CD8-positive, alpha-beta T cell (primary cell): ENCODE measurements at regions of chr13 and their contacts with region 1.

Region 1: GRCh38 chr13:99269627-99270241 is 11.6 kb upstream of the GPR18 start:
- DNase-seq: peak in 4 of 9 experiments; percentile 26 to 84 (median 58)
- ATAC-seq: peak; percentile 68
- H3K4me3 ChIP-seq: no peak overlapping the region
- H3K4me3 Mint-ChIP-seq: no peak overlapping the region
- H3K27ac ChIP-seq: no peak overlapping the region
- H3K27ac Mint-ChIP-seq: peak overlapping the region; percentile 92
- H3K4me1 ChIP-seq: peaks cover 54% of the 10 kb centered on the region
- H3K4me1 Mint-ChIP-seq: peaks cover 63% of the 10 kb centered on the region
- H3K27me3 ChIP-seq: no peaks in the 10 kb centered on the region
- H3K27me3 Mint-ChIP-seq: no peaks in the 10 kb centered on the region
- CTCF ChIP-seq: peak; percentile 91

Region 2: DNA sequence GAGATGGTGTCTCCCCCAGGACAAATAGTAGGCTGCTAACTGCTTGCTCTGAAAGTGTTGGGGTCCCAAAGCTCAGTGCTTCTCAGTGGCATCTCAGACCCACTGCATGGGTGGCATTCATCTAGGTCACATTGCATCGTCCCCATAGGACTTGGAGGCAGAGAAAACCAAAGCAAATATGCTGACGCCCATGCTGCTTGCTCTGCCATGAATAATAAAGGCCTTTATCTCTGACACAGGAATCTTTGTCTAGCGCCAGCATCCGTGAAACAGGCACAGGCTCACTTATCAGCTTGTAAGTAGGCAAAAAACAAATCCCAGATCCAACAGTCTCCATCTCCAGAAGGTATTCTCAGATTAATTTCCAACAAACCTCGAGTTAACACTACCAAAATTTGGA is 1335.1 kb before region 1 on chr13:
- CTCF ChIA-PET with region 1: no interaction called
- POLR2A ChIA-PET with region 1: no interaction called
- intact Hi-C with region 1: no loop called
- DNase-seq: no peak
- ATAC-seq: no peak
- H3K4me3 ChIP-seq: no peak overlapping the region
- H3K4me3 Mint-ChIP-seq: no peak overlapping the region
- H3K27ac ChIP-seq: no peak overlapping the region
- H3K27ac Mint-ChIP-seq: no peak overlapping the region
- H3K4me1 ChIP-seq: no peaks in the 10 kb centered on the region
- H3K4me1 Mint-ChIP-seq: no peaks in the 10 kb centered on the region
- H3K27me3 ChIP-seq: no peaks in the 10 kb centered on the region
- H3K27me3 Mint-ChIP-seq: peaks cover 43% of the 10 kb centered on the region
- CTCF ChIP-seq: no peak

Region 3: DNA sequence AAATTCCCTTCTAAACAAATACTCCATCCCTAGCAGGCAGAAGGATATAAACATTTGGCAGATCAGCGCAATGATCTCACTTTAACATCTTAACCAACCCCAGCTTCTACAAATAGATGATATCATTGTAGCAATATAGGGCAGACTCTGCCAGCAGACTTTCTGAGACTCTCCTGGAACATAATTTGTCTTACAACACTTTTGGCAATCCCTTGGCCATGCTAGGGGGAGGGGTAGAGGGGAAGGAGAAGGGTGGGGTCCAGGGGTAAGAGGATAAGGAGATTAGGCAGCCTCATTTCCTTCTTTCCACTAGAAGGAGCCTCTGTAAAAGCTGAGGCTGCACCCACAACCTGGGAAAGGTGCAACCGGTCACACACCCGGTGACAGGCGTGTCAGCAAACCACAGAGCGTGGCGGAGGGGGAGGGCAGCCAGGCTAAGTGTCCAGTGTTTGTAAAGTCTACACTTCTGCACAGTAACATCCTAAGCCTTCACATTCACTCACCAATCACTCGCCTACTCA is 77.8 kb before region 1 on chr13:
- CTCF ChIA-PET with region 1: interaction called, 254 read pairs
- POLR2A ChIA-PET with region 1: interaction called, 5 read pairs
- intact Hi-C with region 1: loop called (anchors 1 kb)
- DNase-seq: no peak
- ATAC-seq: no peak
- H3K4me3 ChIP-seq: no peak overlapping the region
- H3K4me3 Mint-ChIP-seq: no peak overlapping the region
- H3K27ac ChIP-seq: no peak overlapping the region
- H3K27ac Mint-ChIP-seq: no peak overlapping the region
- H3K4me1 ChIP-seq: peaks cover 15% of the 10 kb centered on the region
- H3K4me1 Mint-ChIP-seq: peaks cover 31% of the 10 kb centered on the region
- H3K27me3 ChIP-seq: no peaks in the 10 kb centered on the region
- H3K27me3 Mint-ChIP-seq: no peaks in the 10 kb centered on the region
- CTCF ChIP-seq: no peak

Region 4: DNA sequence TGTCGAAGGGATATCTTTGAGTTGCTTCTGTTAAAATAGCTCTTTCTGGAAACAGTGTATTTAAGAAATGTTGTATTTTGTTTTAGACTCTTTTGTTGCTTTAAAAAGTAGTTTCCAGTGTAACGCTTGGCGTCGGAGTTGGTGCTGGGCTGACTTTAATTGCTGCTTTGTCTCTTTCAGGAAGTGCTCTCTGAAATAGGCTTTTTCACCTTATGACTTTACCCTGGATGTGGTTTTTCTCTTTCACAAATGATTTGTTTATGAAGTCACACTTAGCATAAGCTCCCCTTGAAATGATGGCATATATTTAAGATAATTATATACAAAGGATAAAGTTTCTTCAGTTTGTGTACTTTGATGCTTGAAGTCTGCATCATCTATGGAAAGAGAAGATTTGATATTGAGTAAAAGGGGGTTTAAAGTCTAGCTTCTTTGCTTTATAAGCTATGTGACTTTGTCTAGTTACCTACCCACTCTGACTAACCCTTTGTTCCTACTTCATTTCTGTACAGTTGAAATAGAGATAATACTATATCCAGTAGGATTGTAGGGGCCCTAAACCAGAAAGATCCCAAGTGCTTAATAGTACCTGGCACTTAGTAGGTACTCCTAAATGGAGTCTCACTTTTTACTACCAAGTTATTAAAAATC is 11.4 kb before region 1 on chr13 and contains the start of gene GPR18:
- CTCF ChIA-PET with region 1: interaction called, 16 read pairs
- POLR2A ChIA-PET with region 1: interaction called, 4 read pairs
- intact Hi-C with region 1: no loop called
- DNase-seq: peak in 4 of 9 experiments; percentile 41 to 80 (median 53)
- ATAC-seq: peak; percentile 77
- H3K4me3 ChIP-seq: peak within 1 kb of the TSS; percentile 55 to 63
- H3K4me3 Mint-ChIP-seq: peak within 1 kb of the TSS; percentile 91
- H3K27ac ChIP-seq: peak within 1 kb of the TSS; percentile 67 to 82
- H3K27ac Mint-ChIP-seq: peak within 1 kb of the TSS; percentile 94
- H3K4me1 ChIP-seq: peaks cover 63% of the 10 kb centered on the region
- H3K4me1 Mint-ChIP-seq: peaks cover 74% of the 10 kb centered on the region
- H3K27me3 ChIP-seq: no peaks in the 10 kb centered on the region
- H3K27me3 Mint-ChIP-seq: no peaks in the 10 kb centered on the region
- CTCF ChIP-seq: no peak
- total RNA-seq, gene GPR18: 31.9 to 36.2 TPM

Region 5: DNA sequence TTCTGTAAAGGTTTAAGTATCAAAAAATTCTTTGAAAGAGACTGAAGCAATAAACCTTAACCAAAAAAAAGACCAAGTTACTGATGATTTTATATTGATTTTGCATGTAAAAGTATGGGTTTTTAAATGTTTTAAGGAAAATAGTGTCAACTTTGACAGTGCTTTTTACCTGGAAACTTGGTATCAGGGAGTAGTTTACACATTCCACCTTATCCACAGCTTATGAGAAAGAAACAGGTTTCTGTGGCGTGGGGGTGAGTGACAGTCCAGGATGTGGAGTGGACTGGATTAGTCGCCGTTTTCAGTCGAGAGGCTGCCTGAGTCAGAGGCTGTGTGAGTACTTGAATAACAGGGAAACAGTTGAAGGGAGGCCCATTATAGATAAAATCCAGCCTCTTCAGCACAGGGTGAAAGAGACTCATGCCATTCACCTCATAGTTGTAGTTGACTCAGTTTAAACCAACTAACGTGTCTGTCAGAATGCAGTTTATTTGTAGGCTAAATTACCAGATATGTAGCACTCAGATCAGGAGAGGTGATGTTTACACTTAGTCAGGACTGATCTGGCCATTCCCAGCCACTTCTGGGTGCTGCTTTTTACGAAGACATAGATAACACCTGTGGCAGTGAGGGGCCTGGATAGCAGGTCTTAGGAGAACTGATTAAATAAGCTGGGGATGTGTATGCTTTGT is 38.1 kb after region 1 on chr13:
- CTCF ChIA-PET with region 1: interaction called, 78 read pairs
- POLR2A ChIA-PET with region 1: interaction called, 6 read pairs
- intact Hi-C with region 1: loop called in 1 of 2 experiments (anchors 5 kb)
- DNase-seq: peak in 5 of 9 experiments; percentile 38 to 63 (median 50)
- ATAC-seq: peak; percentile 57
- H3K4me3 ChIP-seq: peak overlapping the region in 1 of 2 experiments; percentile 53
- H3K4me3 Mint-ChIP-seq: peak overlapping the region; percentile 93
- H3K27ac ChIP-seq: peak overlapping the region; percentile 13 to 65
- H3K27ac Mint-ChIP-seq: peak overlapping the region; percentile 89
- H3K4me1 ChIP-seq: peaks cover 67% of the 10 kb centered on the region
- H3K4me1 Mint-ChIP-seq: peaks cover 81% of the 10 kb centered on the region
- H3K27me3 ChIP-seq: no peaks in the 10 kb centered on the region
- H3K27me3 Mint-ChIP-seq: no peaks in the 10 kb centered on the region
- CTCF ChIP-seq: no peak

Region 6: DNA sequence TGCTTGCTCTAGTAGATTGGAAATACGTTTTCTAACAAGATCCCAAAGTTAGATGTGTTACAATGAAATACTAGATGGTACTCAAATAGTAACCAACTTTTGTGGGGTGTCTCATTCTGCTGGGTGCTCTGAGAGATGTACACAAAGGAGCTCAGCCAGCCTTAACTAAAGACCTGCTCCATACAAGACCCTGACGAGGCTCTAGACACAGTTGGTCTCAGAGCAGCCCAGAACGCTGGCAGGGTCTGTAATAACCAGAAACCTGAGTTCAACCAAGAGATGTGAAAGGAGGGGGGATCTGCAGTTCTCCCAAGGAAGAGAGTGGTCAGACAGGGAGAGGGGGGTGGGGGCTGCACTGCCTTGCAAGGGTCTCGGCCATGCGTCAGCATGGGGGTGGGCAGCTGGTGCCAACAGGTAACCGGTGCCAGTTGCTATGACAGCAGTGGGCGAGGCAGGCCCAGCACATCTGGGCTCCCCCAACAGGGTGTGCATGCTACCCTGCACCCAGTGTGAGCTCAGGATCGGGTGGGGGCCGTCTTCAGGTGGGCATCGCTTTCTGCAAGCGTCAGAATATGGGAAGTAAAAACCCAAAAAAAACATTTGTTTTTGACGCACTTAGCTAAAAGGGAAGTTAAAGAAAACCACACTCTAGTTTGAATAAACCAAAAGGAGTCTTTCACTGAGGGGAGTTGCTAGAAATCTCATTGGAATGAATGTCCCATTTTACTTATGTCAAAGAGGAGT is 105.4 kb after region 1 on chr13:
- CTCF ChIA-PET with region 1: interaction called, 21 read pairs
- POLR2A ChIA-PET with region 1: interaction called, 7 read pairs
- intact Hi-C with region 1: no loop called
- DNase-seq: peak in 8 of 9 experiments; percentile 60 to 91 (median 80)
- ATAC-seq: peak; percentile 89
- H3K4me3 ChIP-seq: peak overlapping the region in 1 of 2 experiments; percentile 18
- H3K4me3 Mint-ChIP-seq: peak overlapping the region; percentile 61
- H3K27ac ChIP-seq: peak overlapping the region; percentile 55 to 85
- H3K27ac Mint-ChIP-seq: peak overlapping the region; percentile 97
- H3K4me1 ChIP-seq: peaks cover 75% of the 10 kb centered on the region
- H3K4me1 Mint-ChIP-seq: peaks cover 92% of the 10 kb centered on the region
- H3K27me3 ChIP-seq: no peaks in the 10 kb centered on the region
- H3K27me3 Mint-ChIP-seq: no peaks in the 10 kb centered on the region
- CTCF ChIP-seq: no peak

Region 7: GRCh38 chr13:99417201-99418102 is 147.7 kb after region 1 on chr13:
- CTCF ChIA-PET with region 1: interaction called, 24 read pairs
- POLR2A ChIA-PET with region 1: interaction called, 4 read pairs
- intact Hi-C with region 1: no loop called
- DNase-seq: peak in 4 of 9 experiments; percentile 43 to 77 (median 64)
- ATAC-seq: peak; percentile 36
- H3K4me3 ChIP-seq: peak overlapping the region; percentile 35 to 57
- H3K4me3 Mint-ChIP-seq: no peak overlapping the region
- H3K27ac ChIP-seq: peak overlapping the region; percentile 43 to 60
- H3K27ac Mint-ChIP-seq: no peak overlapping the region
- H3K4me1 ChIP-seq: peaks cover 96% of the 10 kb centered on the region
- H3K4me1 Mint-ChIP-seq: peaks cover 63% of the 10 kb centered on the region
- H3K27me3 ChIP-seq: no peaks in the 10 kb centered on the region
- H3K27me3 Mint-ChIP-seq: no peaks in the 10 kb centered on the region
- CTCF ChIP-seq: no peak